ENCODE measurements at regions of chr18 and their contacts with region 1.

Region 1: GRCh38 chr18:11980555-11981382 is 538 bp upstream of the IMPA2 start:
- DNase-seq: peak; percentile 97
- ATAC-seq: peak; percentile 94
- H3K4me3 Mint-ChIP-seq: peak overlapping the region; percentile 91
- H3K27ac Mint-ChIP-seq: peak overlapping the region; percentile 82
- H3K4me1 Mint-ChIP-seq: peaks cover 17% of the 10 kb centered on the region
- H3K27me3 Mint-ChIP-seq: peaks cover 5% of the 10 kb centered on the region
- CTCF ChIP-seq: no peak

Region 2: DNA sequence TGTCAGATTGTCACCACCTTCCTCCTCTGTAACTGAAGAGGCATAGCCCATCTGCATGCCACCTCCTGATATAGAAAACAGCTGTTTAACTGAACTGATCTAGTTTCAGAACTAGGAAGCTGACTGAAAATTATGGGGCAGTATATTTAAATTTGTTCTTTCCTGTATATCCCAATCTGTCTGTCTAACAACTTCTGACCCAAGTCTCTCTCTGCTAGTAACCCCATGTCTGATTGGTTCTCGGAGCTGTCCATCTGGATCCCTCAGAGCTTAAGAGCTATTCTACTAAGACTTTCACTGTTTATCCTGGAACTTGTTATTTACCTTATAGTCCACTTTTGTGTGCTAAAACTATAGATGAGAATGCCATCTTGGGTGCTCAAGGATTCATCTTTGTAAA is 439.6 kb before region 1 on chr18:
- CTCF ChIA-PET with region 1: no interaction called
- POLR2A ChIA-PET with region 1: no interaction called
- intact Hi-C with region 1: no loop called
- DNase-seq: no peak
- ATAC-seq: no peak
- H3K4me3 Mint-ChIP-seq: no peak overlapping the region
- H3K27ac Mint-ChIP-seq: no peak overlapping the region
- H3K4me1 Mint-ChIP-seq: no peaks in the 10 kb centered on the region
- H3K27me3 Mint-ChIP-seq: no peaks in the 10 kb centered on the region
- CTCF ChIP-seq: no peak

Region 3: GRCh38 chr18:11947214-11948191 is 33.3 kb before region 1 on chr18:
- CTCF ChIA-PET with region 1: interaction called, 3 read pairs
- POLR2A ChIA-PET with region 1: interaction called, 15 read pairs
- intact Hi-C with region 1: loop called (anchors 5 kb)
- DNase-seq: peak; percentile 82
- ATAC-seq: peak; percentile 89
- H3K4me3 Mint-ChIP-seq: peak overlapping the region; percentile 73
- H3K27ac Mint-ChIP-seq: peak overlapping the region; percentile 87
- H3K4me1 Mint-ChIP-seq: peaks cover 5% of the 10 kb centered on the region
- H3K27me3 Mint-ChIP-seq: no peaks in the 10 kb centered on the region
- CTCF ChIP-seq: no peak

Measured in activated CD8-positive, alpha-beta T cell treated with anti-CD3 and anti-CD28 coated beads for 36 hours (primary cell).